Activated CD4-positive, alpha-beta T cell treated with anti-CD3 and anti-CD28 coated beads for 36 hours (primary cell): ENCODE measurements at regions of chr3 and their contacts with region 1.

Region 1: DNA sequence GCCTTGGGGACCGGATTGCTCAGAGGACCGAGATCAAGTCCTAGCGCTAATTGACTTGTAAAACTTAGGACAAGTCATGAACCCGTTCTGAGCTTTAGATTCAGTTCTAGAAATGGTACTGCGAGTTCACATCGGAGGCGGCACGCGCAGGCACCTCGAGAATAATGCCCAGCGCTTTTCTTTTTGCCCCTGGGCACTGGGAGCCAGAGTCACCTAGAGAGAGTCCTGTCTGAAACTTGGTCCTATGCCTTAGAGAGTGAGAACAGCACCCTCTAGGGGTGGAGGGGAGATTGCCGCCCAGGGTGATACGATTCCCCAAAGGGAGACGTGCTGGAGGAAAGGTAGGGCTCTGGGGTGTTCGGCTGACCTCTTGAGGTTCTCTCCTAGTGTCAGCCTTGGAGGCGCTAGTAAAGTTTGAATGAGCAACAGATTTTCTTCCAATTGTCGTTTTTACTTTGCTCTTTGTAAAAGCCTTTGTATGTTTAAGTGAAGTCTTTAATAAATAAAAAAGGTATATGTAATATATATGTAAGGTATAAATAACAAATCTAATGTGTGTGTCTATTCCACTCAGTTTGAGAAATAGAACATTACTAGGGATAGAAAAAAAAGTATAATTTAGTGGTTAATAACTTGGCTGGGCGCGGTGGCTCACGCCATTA is 826 bp downstream of the EEF1AKMT4 start:
- DNase-seq: peak; percentile 95
- ATAC-seq: peak; percentile 72
- H3K4me3 Mint-ChIP-seq: peak overlapping the region; percentile 98
- H3K27ac Mint-ChIP-seq: peak overlapping the region; percentile 99
- H3K4me1 Mint-ChIP-seq: peaks cover 9% of the 10 kb centered on the region
- H3K27me3 Mint-ChIP-seq: no peaks in the 10 kb centered on the region

Region 2: GRCh38 chr3:183555541-183556081 is 694.7 kb before region 1 on chr3 and contains the start of gene KLHL6:
- CTCF ChIA-PET with region 1: no interaction called
- POLR2A ChIA-PET with region 1: no interaction called
- intact Hi-C with region 1: loop called in 1 of 2 experiments (anchors 10 kb)
- DNase-seq: peak; percentile 89
- ATAC-seq: peak; percentile 85
- H3K4me3 Mint-ChIP-seq: peak within 1 kb of the TSS; percentile 97
- H3K27ac Mint-ChIP-seq: peak within 1 kb of the TSS; percentile 100
- H3K4me1 Mint-ChIP-seq: peaks cover 47% of the 10 kb centered on the region
- H3K27me3 Mint-ChIP-seq: no peaks in the 10 kb centered on the region
- total RNA-seq, gene KLHL6: 62.8 to 64.7 TPM

Region 3: DNA sequence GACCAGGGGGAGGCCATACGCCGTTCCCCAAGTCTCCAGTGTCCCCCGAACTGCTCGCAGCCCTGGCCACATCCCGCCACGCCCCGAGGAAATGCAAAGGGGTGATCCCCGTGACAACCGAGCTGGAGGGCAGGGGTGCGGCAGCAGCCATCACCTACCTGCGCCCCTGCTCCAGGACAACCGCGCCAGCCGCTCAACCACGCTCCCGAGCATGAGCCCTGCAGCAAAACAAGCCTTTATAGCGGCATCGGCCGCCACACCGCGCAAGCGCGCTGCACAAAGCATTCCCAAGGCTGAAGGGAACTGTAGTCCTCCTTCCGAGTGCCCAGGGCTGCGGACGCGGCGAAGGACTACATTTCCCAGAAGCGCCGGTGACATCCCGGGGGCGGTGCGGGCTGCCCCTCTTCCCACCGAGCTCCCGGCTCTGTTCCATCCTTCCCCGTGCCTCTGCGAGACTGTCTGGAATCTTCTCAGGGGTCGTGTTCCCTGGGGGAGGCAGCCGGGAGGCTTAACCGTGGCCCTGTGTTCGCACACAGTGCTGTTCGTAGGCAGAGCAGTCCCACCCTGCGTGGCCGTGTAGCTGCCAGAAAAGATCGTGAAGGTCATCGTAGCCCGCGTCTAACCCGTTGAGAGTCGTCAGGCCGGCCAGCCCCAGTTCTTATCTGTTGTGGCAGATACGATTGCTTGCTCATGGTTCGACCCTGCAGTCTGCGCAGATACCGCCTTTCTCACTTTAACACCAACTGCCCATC is 232.4 kb before region 1 on chr3 and contains the start of gene ABCC5:
- CTCF ChIA-PET with region 1: no interaction called
- POLR2A ChIA-PET with region 1: no interaction called
- intact Hi-C with region 1: loop called in 1 of 2 experiments (anchors 1 kb)
- DNase-seq: peak; percentile 91
- ATAC-seq: peak; percentile 96
- H3K4me3 Mint-ChIP-seq: peak within 1 kb of the TSS; percentile 98
- H3K27ac Mint-ChIP-seq: peak within 1 kb of the TSS; percentile 85
- H3K4me1 Mint-ChIP-seq: peaks cover 17% of the 10 kb centered on the region
- H3K27me3 Mint-ChIP-seq: peaks cover 9% of the 10 kb centered on the region
- total RNA-seq, gene ABCC5: 12.5 to 15.8 TPM

Region 4: DNA sequence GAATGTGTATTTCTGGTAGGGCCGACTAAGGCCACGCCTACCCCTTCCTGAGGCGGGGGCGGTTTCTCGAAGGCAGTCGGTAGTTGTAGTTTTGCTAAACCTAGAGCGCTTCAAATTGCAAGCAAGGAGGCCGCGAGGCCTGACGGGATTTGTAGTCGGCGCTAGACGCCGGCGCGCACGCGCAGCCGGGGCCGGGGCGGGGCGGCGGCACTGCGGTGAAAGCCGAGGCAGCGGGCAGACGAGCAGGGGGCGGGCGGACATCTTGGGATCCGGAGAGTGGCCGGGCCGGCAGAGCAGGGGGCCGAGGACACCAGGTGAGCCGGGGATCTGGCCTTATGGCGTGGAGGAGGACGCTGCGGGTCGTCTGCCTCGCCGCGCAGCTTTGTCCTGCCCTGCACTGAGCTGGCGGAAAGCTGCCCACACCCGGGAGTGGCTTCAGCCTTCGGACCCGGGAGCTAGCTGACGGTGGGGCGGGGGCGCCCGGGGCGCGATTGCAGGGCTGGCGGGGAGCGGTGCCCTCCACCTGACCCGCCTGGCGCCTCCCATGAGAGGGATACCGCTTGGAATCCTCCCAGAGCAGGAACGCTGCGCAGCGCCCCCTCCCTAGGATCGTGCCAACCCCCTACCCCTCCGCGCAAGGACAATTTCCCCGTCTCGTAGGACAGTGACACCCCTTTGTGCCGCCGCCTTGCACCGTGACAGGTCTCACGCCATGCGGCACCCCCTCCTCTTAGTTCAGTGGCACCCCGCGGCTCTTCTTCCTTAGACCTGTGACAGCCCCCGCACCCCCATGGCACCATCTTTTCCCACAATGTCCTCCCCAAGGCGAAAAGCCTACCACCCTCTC is 75.4 kb before region 1 on chr3 and contains the start of gene AP2M1:
- CTCF ChIA-PET with region 1: interaction called, 3 read pairs
- POLR2A ChIA-PET with region 1: interaction called, 4 read pairs
- intact Hi-C with region 1: loop called (anchors 1 kb)
- DNase-seq: peak; percentile 98
- ATAC-seq: peak; percentile 97
- H3K4me3 Mint-ChIP-seq: peak within 1 kb of the TSS; percentile 95
- H3K27ac Mint-ChIP-seq: peak within 1 kb of the TSS; percentile 89
- H3K4me1 Mint-ChIP-seq: peaks cover 23% of the 10 kb centered on the region
- H3K27me3 Mint-ChIP-seq: no peaks in the 10 kb centered on the region
- total RNA-seq, gene AP2M1: 192 to 204 TPM

Region 5: DNA sequence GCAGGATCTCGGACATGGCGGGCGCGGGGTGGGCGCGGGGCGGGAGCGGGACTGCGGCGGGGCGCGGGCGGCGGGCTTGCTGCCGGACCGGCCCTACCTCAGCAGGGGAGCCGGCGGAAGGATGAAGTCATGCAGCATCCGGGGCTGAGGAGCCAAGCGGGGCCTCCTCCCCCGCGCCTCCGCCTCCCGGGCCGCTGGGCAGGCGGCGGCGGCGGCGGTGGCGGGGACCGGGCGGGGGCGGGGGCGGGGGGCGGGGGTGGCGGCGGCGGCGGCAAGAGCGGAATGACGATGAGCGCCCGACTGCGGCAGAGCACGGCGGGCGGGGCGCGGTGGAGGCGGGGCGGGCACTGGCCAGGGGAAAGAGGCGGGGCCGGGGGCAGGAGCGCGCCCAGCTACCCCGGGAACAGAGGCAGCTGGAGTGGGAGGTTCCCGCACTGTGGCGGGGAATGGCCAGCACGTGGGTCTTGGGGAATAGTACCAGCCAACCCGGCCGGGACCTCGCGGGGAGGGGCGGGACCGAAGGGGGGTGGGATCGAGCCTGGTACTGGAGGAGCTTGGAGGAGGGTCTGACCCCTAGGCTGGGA is 11.1 kb after region 1 on chr3 and contains the start of gene CAMK2N2:
- CTCF ChIA-PET with region 1: interaction called, 10 read pairs
- POLR2A ChIA-PET with region 1: no interaction called
- intact Hi-C with region 1: loop called (anchors 1 kb)
- DNase-seq: peak; percentile 73
- ATAC-seq: peak; percentile 59
- H3K4me3 Mint-ChIP-seq: peak within 1 kb of the TSS; percentile 73
- H3K27ac Mint-ChIP-seq: no peak within 1 kb of the TSS
- H3K4me1 Mint-ChIP-seq: peaks cover 20% of the 10 kb centered on the region
- H3K27me3 Mint-ChIP-seq: peaks cover 31% of the 10 kb centered on the region
- total RNA-seq, gene CAMK2N2: 0.18 to 0.25 TPM

Region 6: GRCh38 chr3:184314363-184314699 is 64.0 kb after region 1 on chr3 and contains the start of gene EIF4G1:
- CTCF ChIA-PET with region 1: interaction called, 5 read pairs
- POLR2A ChIA-PET with region 1: interaction called, 3 read pairs
- intact Hi-C with region 1: loop called (anchors 1 kb)
- DNase-seq: peak; percentile 96
- ATAC-seq: peak; percentile 89
- H3K4me3 Mint-ChIP-seq: peak within 1 kb of the TSS; percentile 84
- H3K27ac Mint-ChIP-seq: peak within 1 kb of the TSS; percentile 90
- H3K4me1 Mint-ChIP-seq: peaks cover 29% of the 10 kb centered on the region
- H3K27me3 Mint-ChIP-seq: no peaks in the 10 kb centered on the region
- total RNA-seq, gene EIF4G1: 479 to 556 TPM

Region 7: DNA sequence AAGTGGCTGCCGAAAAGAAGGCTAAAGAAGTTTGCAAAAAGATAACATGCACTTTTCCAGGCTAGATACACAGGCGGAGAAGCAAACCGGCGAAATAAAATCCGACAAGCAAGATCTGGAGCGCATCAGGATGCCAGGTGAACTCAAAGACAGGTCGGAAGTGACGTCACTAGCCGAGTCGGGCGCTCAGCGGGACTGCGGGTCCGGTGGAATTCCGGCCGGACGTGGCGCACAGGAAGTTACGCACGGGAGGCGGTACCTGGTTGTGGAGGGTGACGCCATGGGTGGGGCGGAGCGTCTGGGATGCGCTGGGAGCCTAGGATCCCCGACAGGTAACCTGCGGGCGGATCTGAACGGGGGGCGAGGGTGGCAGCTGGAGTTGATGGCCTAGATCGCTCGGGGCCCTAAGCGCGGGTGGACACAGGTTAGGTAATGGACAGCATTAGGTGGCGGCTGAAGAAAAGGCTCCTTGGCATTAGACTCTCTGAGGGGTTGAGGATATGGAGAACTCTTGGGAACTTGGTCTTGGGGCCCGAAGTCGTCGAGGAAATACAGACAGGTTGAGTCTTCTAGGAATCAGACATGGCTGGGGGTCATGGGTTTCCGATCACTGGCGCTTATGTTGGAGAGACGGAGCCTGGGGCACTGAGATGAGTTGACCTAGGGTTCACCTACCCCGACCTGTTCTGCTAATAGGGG is 1032.5 kb after region 1 on chr3:
- CTCF ChIA-PET with region 1: no interaction called
- POLR2A ChIA-PET with region 1: no interaction called
- intact Hi-C with region 1: loop called in 1 of 2 experiments (anchors 2 kb)
- DNase-seq: peak; percentile 98
- ATAC-seq: peak; percentile 100
- H3K4me3 Mint-ChIP-seq: peak overlapping the region; percentile 97
- H3K27ac Mint-ChIP-seq: peak overlapping the region; percentile 92
- H3K4me1 Mint-ChIP-seq: peaks cover 19% of the 10 kb centered on the region
- H3K27me3 Mint-ChIP-seq: peaks cover 7% of the 10 kb centered on the region